ENCODE measurements at regions of chr6 and their contacts with region 1.

Region 1: DNA sequence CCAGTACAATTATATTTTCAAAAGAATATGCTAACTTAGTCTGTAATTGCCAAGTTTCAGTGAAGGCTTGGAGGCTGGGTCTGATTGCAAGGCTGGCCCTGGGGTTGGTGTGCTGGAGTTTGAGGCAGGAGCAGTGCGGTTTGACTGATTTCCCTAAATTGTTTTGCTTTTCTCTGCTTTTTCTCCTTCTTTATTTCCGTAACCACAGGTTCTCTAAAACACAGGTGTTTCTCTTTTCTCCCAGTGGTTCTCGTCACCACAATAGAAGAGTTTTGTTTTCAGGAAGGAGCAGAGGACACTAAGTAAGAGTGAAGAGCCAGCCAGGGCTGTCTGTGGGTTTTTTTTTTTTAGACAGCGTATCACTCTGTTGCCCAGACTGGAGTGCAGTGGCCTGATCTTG is 8.2 kb upstream of the SNX9 start:
- DNase-seq: no peak
- ATAC-seq: no peak
- H3K4me3 ChIP-seq: no peak overlapping the region
- H3K27ac ChIP-seq: no peak overlapping the region
- H3K4me1 ChIP-seq: peaks cover 29 to 56% of the 10 kb centered on the region in 2 experiments
- H3K27me3 ChIP-seq: no peaks in the 10 kb centered on the region
- CTCF ChIP-seq: no peak
- EP300 ChIP-seq: no peak
- POLR2A ChIP-seq: no peak
- RAD21 ChIP-seq: no peak

Region 2: DNA sequence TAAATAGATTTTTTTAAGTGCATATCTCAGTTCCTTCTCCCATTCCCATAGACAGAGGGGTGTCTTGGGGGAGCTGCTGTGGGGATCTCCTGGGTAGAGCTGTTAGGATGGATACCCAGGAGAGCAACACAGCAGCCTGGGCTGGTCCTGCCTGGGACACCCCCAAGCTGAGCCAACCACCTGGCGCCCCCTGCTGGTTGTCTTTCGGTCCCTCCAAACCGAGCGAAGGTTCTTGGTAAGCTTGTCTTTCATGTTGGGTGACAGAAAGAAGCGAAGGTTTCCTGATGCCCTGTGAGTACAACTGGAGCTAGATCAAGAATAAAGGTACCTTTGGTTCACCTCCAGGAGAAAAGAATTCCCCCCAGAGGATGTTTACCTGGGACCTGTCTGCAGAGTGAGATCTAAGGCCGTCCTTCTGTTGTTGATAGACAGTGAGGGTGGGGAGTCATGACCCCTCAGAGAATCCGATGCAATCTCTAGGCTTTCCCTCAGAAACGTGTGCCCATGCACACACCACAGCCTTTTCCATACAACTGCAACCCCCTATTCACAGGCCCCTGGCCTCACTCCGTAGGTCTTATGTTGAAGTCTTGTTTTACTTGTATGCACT is 59.0 kb after region 1 on chr6:
- CTCF ChIA-PET with region 1: no interaction called
- POLR2A ChIA-PET with region 1: no interaction called
- in situ Hi-C with region 1: no loop called
- intact Hi-C with region 1: loop called (anchors 1 kb)
- DNase-seq: peak; percentile 78 to 91 (median 82)
- ATAC-seq: peak; percentile 98
- H3K4me3 ChIP-seq: no peak overlapping the region
- H3K27ac ChIP-seq: no peak overlapping the region
- H3K4me1 ChIP-seq: no peaks in the 10 kb centered on the region
- H3K27me3 ChIP-seq: no peaks in the 10 kb centered on the region
- CTCF ChIP-seq: peak; percentile 91 to 97 (median 92)
- EP300 ChIP-seq: 0 out of 2 replicates have a peak, but pooled peaks have one; percentile 7
- POLR2A ChIP-seq: 0 out of 2 replicates have a peak, but pooled peaks have one; percentile 9
- RAD21 ChIP-seq: peak; percentile 95 to 97